Activated CD4-positive, alpha-beta memory T cell treated with anti-CD3 and anti-CD28 coated beads for 36 hours (primary cell): ENCODE measurements at regions of chr2 and their contacts with region 1.

Region 1: DNA sequence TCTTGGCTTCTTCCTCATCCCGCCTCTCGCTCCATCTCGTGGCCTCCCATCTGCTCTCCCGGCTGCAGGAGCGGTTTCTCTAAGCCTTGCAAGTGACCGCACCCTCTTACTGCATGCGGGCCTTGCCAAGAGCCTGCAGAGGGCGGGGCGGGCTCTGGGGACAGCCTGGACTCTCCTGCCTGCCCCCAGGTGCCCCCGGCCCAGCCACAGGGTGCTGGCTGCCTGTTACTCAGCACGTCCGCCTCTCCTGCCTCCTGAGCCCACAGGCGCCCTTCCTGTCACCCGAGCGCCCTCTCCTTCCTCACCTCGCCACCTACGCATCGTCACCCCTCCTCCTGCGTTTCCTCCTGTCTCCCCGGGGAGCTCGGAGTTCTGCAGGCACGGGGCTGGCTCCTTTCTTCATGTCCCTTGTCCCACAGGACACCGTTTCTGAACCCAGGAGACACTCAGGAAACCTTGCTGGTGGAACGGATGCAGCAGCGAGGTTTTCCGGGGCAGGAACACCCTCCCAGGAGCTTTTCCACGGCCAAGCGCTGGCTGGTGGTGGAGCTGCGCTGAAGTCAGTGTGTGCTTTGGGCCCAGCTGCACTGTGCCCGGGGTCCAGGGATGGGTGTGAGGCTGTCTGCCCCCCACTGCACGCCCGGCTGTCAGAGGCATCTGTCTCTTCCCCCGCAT is 28.5 kb downstream of the HPCAL1 start:
- DNase-seq: peak; percentile 91
- H3K4me3 Mint-ChIP-seq: peak overlapping the region; percentile 86
- H3K27ac Mint-ChIP-seq: peak overlapping the region; percentile 90
- H3K4me1 Mint-ChIP-seq: peaks cover 76% of the 10 kb centered on the region
- H3K27me3 Mint-ChIP-seq: no peaks in the 10 kb centered on the region

Region 2: GRCh38 chr2:10269711-10270610 is 61.2 kb before region 1 on chr2:
- CTCF ChIA-PET with region 1: no interaction called
- POLR2A ChIA-PET with region 1: no interaction called
- intact Hi-C with region 1: loop called (anchors 5 kb)
- DNase-seq: no peak
- H3K4me3 Mint-ChIP-seq: no peak overlapping the region
- H3K27ac Mint-ChIP-seq: no peak overlapping the region
- H3K4me1 Mint-ChIP-seq: peaks cover 10% of the 10 kb centered on the region
- H3K27me3 Mint-ChIP-seq: no peaks in the 10 kb centered on the region

Region 3: DNA sequence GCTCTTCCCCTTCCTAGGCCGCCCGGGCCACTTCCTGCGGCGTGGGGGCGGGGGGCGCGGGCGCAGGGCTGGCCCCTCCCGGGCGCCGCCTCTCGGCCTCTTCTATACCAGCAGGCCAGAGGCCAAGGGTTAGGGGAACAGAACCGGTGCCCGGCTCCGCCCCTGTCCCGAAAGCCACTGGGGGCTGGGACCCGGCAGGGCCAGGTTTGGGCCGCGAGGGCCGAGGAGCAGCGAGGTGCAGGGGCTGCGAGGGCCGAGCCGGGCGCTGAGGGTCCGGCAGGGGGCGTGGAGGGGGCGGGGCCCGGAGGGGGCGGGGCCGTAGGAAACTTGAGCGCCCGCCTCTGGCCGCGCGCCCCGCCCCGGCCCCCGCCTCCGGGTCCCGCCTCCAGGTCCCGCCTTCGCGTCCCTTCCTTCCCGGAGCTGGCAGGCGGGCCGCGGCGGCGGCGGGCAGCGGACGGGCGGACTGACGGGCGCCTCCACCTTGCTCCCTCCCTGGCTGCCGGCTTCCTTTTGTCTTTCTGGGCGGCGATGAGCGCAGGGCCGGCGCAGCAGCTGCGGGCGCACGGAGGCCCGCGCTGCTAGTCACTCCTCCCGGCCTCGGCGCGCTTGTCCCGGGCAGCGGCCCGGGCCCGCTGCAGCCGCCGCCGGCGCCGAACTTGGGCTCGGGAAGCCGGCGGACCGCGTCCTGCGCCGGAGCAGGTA is 28.5 kb before region 1 on chr2 and contains the start of gene HPCAL1:
- CTCF ChIA-PET with region 1: interaction called, 33 read pairs
- POLR2A ChIA-PET with region 1: interaction called, 65 read pairs
- intact Hi-C with region 1: loop called (anchors 1 kb)
- DNase-seq: peak; percentile 88
- H3K4me3 Mint-ChIP-seq: peak within 1 kb of the TSS; percentile 99
- H3K27ac Mint-ChIP-seq: peak within 1 kb of the TSS; percentile 83
- H3K4me1 Mint-ChIP-seq: peaks cover 72% of the 10 kb centered on the region
- H3K27me3 Mint-ChIP-seq: no peaks in the 10 kb centered on the region
- total RNA-seq, gene HPCAL1: 82.2 to 82.6 TPM

Region 4: DNA sequence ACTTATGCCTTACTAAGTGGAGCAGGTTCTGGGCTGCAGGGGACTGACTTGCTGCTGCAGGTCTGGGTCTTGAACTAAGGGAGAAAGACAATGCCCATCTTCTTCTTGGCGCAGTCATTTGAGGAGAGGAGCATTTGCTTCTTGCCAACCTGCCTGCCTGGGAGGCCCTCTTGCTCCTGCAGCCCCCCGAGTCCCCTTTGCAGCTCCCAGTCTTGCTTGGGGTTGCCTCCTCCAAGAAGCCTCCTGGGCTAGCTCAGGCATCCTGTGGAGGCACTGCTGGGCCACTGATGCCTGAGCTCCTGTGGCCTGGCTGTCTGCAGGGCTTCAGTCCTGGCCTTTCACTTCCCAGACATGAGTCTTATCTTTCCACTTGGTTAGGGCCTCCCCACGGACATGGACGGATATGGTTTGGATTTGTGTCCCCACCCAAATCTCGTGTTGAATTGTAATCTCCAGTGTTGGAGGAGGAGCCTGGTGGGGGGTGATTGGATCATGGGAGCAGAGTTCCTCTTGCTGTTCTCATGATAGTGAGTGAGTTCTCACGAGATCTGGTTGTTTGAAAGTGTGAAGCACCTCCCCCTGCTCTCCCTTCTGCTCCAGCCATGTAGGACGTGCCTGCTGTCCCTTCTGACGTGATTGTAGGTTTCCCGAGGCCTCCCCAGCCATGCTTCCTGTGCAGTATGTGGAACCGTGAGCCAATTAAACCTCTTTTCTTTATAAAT is 11.2 kb before region 1 on chr2:
- CTCF ChIA-PET with region 1: interaction called, 3 read pairs
- POLR2A ChIA-PET with region 1: interaction called, 4 read pairs
- intact Hi-C with region 1: loop called (anchors 1 kb)
- DNase-seq: no peak
- H3K4me3 Mint-ChIP-seq: no peak overlapping the region
- H3K27ac Mint-ChIP-seq: no peak overlapping the region
- H3K4me1 Mint-ChIP-seq: peaks cover 56% of the 10 kb centered on the region
- H3K27me3 Mint-ChIP-seq: no peaks in the 10 kb centered on the region

Region 5: GRCh38 chr2:10382354-10383061 is 51.3 kb after region 1 on chr2:
- CTCF ChIA-PET with region 1: interaction called, 4 read pairs
- POLR2A ChIA-PET with region 1: interaction called, 3 read pairs
- intact Hi-C with region 1: loop called (anchors 2 kb)
- DNase-seq: peak; percentile 52
- H3K4me3 Mint-ChIP-seq: peak overlapping the region; percentile 27
- H3K27ac Mint-ChIP-seq: no peak overlapping the region
- H3K4me1 Mint-ChIP-seq: peaks cover 89% of the 10 kb centered on the region
- H3K27me3 Mint-ChIP-seq: no peaks in the 10 kb centered on the region

Region 6: GRCh38 chr2:10654069-10654468 is 322.9 kb after region 1 on chr2:
- CTCF ChIA-PET with region 1: no interaction called
- POLR2A ChIA-PET with region 1: no interaction called
- intact Hi-C with region 1: loop called (anchors 1 kb)
- DNase-seq: peak; percentile 85
- H3K4me3 Mint-ChIP-seq: no peak overlapping the region
- H3K27ac Mint-ChIP-seq: peak overlapping the region; percentile 80
- H3K4me1 Mint-ChIP-seq: peaks cover 44% of the 10 kb centered on the region
- H3K27me3 Mint-ChIP-seq: no peaks in the 10 kb centered on the region